Panc1 (cell line): ENCODE measurements at regions of chr12 and their contacts with region 1.

Region 1: DNA sequence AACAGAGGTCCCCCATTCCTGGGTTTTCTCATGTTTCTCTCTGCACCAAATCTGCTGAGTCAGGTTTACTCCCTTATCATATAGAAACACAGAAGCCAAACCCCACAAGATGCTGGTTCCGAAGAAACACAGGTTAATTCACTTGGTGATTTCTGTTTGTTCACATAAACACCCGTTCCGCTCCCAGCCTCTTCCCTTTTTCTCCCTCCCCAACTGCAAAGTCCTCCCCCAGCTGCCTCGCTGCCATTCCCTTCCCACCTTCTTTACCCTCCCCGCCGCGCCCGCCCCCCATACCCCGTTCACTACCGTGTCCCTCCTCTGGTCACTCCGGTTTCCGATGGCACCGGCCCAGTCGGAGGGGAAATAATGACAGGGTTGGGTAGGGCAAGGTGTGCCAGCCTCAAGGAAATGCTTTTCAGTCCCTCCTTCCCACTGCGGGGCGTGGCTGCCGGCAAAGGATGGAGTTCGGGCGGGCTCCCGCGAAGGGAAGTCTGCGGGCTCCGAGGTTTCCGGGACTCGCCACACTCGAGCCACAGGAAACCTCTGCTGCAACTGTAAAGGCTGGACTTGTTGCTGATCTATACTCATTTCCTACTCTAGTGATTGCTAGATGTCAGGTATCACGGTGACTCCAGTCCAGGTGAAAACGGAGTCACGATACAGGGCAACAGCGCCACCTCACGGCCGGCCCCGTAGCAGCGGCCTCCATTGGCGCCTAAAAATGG is at the start of gene STYK1:
- DNase-seq: peak; percentile 42
- ATAC-seq: peak; percentile 92
- H3K4me3 ChIP-seq: peak within 1 kb of the TSS; percentile 56 to 68
- H3K27ac ChIP-seq: no peak within 1 kb of the TSS
- H3K4me1 ChIP-seq: no peaks in the 10 kb centered on the region
- H3K27me3 ChIP-seq: no peaks in the 10 kb centered on the region; the same call in 1 of the 2 replicates
- CTCF ChIP-seq: peak; percentile 92
- total RNA-seq, gene STYK1: 0.85 TPM

Region 2: GRCh38 chr12:10607885-10608458 is 65.8 kb before region 1 on chr12:
- CTCF ChIA-PET with region 1: no interaction called
- POLR2A ChIA-PET with region 1: no interaction called
- in situ Hi-C with region 1: no loop called
- intact Hi-C with region 1: loop called (anchors 10 kb)
- DNase-seq: no peak
- ATAC-seq: no peak
- H3K4me3 ChIP-seq: no peak overlapping the region
- H3K27ac ChIP-seq: no peak overlapping the region
- H3K4me1 ChIP-seq: no peaks in the 10 kb centered on the region; the same call in 1 of the 2 replicates
- H3K27me3 ChIP-seq: no peaks in the 10 kb centered on the region
- CTCF ChIP-seq: peak; percentile 36; the same call in 1 of the 2 replicates

Region 3: DNA sequence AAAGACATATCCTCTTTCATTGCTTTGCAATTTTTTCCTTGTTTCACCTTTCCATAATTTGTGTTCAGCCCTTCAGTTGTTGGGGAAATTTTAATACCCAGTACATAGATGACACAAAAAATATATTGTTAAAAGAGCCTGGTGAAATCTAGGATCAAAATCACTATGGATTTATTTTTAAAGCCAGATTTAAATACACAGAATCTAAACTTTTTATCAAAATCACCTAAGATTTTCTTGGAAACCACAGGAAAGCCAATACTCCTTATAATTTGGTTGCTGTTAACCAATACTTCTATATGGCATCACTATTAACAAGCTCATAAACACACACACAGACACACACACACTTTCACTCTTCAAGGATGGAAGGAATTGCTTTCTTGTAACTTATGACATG is 324.4 kb after region 1 on chr12 and contains the start of gene TAS2R20:
- CTCF ChIA-PET with region 1: no interaction called
- POLR2A ChIA-PET with region 1: no interaction called
- in situ Hi-C with region 1: no loop called
- intact Hi-C with region 1: no loop called
- DNase-seq: no peak
- ATAC-seq: no peak
- H3K4me3 ChIP-seq: no peak within 1 kb of the TSS
- H3K27ac ChIP-seq: no peak within 1 kb of the TSS
- H3K4me1 ChIP-seq: no peaks in the 10 kb centered on the region
- H3K27me3 ChIP-seq: no peaks in the 10 kb centered on the region
- CTCF ChIP-seq: no peak
- total RNA-seq, gene TAS2R20: 0.95 TPM